PC-3 (cell line): ENCODE measurements at regions of chr3 and their contacts with region 1.

Region 1: GRCh38 chr3:10804183-10804648 is 11.8 kb upstream of the SLC6A11 start:
- DNase-seq: peak; percentile 99
- ATAC-seq: peak; percentile 92
- H3K4me3 ChIP-seq: no peak overlapping the region
- H3K27ac ChIP-seq: peak overlapping the region; percentile 93
- H3K4me1 ChIP-seq: peaks cover 42% of the 10 kb centered on the region
- H3K27me3 ChIP-seq: no peaks in the 10 kb centered on the region
- CTCF ChIP-seq: no peak

Region 2: GRCh38 chr3:10783357-10784351 is 20.6 kb before region 1 on chr3:
- CTCF ChIA-PET with region 1: interaction called, 3 read pairs
- POLR2A ChIA-PET with region 1: no interaction called
- intact Hi-C with region 1: loop called (anchors 2 kb)
- DNase-seq: peak; percentile 78
- ATAC-seq: peak; percentile 18; the same call in 1 of the 2 replicates
- H3K4me3 ChIP-seq: no peak overlapping the region
- H3K27ac ChIP-seq: no peak overlapping the region
- H3K4me1 ChIP-seq: peaks cover 46% of the 10 kb centered on the region
- H3K27me3 ChIP-seq: no peaks in the 10 kb centered on the region
- CTCF ChIP-seq: peak; percentile 92

Region 3: GRCh38 chr3:10845001-10845761 is 41.0 kb after region 1 on chr3:
- CTCF ChIA-PET with region 1: no interaction called
- POLR2A ChIA-PET with region 1: no interaction called
- intact Hi-C with region 1: no loop called
- DNase-seq: no peak
- ATAC-seq: no peak
- H3K4me3 ChIP-seq: no peak overlapping the region
- H3K27ac ChIP-seq: no peak overlapping the region
- H3K4me1 ChIP-seq: no peaks in the 10 kb centered on the region
- H3K27me3 ChIP-seq: no peaks in the 10 kb centered on the region
- CTCF ChIP-seq: no peak